H1 (cell line): ENCODE measurements at regions of chr5 and their contacts with region 1.

Region 1: DNA sequence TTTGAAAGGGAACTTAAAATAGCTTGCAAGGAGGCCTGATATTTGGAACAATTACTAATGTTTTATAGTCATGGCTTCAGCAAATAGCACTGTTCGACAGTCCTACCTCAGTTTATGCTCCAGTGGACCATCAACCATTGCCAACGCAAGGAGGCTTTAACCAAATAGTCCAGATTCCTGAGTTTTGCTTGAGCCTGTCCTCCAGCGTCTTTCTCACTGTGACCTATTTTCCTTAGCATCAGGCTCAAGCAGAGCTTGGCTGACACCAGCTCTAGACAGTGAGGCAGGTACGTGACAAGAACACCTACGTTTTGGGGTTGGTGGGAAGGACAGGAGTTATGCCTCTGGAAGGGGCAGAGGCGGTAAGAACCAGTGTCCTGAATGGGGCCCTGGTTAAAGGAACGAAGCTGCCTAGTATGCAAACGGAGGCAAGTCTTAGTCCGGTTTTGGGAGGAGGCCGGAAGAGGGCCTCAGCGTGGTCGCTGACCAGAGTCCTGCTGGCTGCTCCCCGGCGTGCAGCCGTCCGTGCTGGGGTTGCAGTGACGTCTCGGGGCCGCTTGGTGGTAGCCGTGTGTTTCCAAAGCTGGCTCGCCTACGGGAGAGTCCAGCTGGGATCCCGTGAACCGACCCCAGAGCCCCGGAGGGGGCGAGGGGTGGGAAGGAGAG is 998 bp upstream of the FGF18 start:
- DNase-seq: peak; percentile 69 to 94
- H3K4me3 ChIP-seq: peak overlapping the region; percentile 35 to 73 (median 70)
- H3K27ac ChIP-seq: no peak overlapping the region
- H3K4me1 ChIP-seq: peaks cover 0 to 22% (median 13%) of the 10 kb centered on the region in 4 experiments; a peak in 6 of 7 replicates
- H3K27me3 ChIP-seq: peaks cover 22 to 37% (median 28%) of the 10 kb centered on the region in 4 experiments
- CTCF ChIP-seq: peak in 2 of 3 experiments; percentile 95 to 97; a peak in 3 of 4 replicates
- EP300 ChIP-seq: no peak
- POLR2A ChIP-seq: no peak
- RAD21 ChIP-seq: peak; percentile 94 to 98

Region 2: DNA sequence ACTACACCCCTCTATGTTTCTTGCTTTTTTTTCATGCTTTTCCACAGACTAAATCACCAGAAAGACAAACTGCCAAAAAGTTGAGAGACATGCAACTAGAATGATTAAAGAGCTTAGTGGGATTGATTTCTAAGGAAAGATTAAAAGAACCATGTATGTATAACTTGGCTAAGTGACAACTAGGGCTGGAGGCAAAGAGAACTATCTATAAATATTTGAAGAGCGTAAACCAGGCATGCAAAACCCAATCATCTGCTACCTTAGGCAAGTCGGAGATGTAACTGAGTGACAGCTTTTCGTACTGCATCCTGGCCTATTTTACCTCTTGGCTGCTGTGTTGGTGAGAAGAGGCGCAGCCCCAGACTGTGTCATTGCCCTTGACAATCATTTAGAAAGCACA is 230.4 kb before region 1 on chr5:
- CTCF ChIA-PET with region 1: no interaction called
- POLR2A ChIA-PET with region 1: no interaction called
- DNase-seq: no peak
- H3K4me3 ChIP-seq: no peak overlapping the region
- H3K27ac ChIP-seq: no peak overlapping the region
- H3K4me1 ChIP-seq: no peaks in the 10 kb centered on the region
- H3K27me3 ChIP-seq: peaks cover 0 to 1% (median 0%) of the 10 kb centered on the region in 4 experiments; a peak in 1 of 7 replicates
- CTCF ChIP-seq: no peak
- EP300 ChIP-seq: no peak
- POLR2A ChIP-seq: no peak
- RAD21 ChIP-seq: no peak

Region 3: GRCh38 chr5:171437286-171437821 is 18.9 kb after region 1 on chr5:
- CTCF ChIA-PET with region 1: interaction called, 56 read pairs
- POLR2A ChIA-PET with region 1: interaction called, 6 read pairs
- DNase-seq: no peak
- H3K4me3 ChIP-seq: peak overlapping the region in 1 of 4 experiments; percentile 1; a peak in 2 of 8 replicates
- H3K27ac ChIP-seq: no peak overlapping the region
- H3K4me1 ChIP-seq: peaks cover 0 to 38% (median 23%) of the 10 kb centered on the region in 4 experiments; a peak in 6 of 7 replicates
- H3K27me3 ChIP-seq: no peaks in the 10 kb centered on the region
- CTCF ChIP-seq: peak in 1 of 3 experiments; percentile 14; a peak in 1 of 4 replicates
- EP300 ChIP-seq: no peak
- POLR2A ChIP-seq: no peak
- RAD21 ChIP-seq: peak in 1 of 2 experiments; percentile 2; a peak in 2 of 4 replicates

Region 4: DNA sequence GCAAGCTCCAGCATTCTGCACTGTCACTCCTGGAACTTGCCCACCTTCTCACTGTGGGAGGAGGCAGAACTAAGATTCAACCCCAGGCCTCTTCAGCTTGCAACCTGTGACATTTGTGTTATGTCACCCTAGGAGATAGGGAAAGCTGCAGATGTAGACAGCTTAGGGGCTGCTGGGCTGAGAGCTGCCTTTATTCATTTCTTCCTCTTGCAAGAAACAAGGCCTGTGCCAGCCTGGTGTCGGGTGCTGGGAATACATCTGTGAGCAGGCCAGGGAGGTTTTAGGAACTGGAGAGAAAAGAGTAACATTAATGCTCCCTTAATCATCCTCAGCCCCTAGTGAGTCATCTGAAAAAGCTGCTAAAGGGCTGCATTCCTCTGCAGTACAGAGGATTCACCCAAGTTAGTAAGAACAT is 102.8 kb after region 1 on chr5:
- CTCF ChIA-PET with region 1: interaction called, 12 read pairs
- POLR2A ChIA-PET with region 1: interaction called, 3 read pairs
- DNase-seq: peak in 1 of 2 experiments; percentile 61
- H3K4me3 ChIP-seq: no peak overlapping the region
- H3K27ac ChIP-seq: peak overlapping the region; percentile 34; the same call in 1 of the 2 replicates
- H3K4me1 ChIP-seq: peaks cover 10 to 37% (median 20%) of the 10 kb centered on the region in 4 experiments
- H3K27me3 ChIP-seq: peaks cover 0 to 12% (median 2%) of the 10 kb centered on the region in 4 experiments; a peak in 3 of 7 replicates
- CTCF ChIP-seq: no peak
- EP300 ChIP-seq: no peak
- POLR2A ChIP-seq: no peak
- RAD21 ChIP-seq: no peak

Region 5: DNA sequence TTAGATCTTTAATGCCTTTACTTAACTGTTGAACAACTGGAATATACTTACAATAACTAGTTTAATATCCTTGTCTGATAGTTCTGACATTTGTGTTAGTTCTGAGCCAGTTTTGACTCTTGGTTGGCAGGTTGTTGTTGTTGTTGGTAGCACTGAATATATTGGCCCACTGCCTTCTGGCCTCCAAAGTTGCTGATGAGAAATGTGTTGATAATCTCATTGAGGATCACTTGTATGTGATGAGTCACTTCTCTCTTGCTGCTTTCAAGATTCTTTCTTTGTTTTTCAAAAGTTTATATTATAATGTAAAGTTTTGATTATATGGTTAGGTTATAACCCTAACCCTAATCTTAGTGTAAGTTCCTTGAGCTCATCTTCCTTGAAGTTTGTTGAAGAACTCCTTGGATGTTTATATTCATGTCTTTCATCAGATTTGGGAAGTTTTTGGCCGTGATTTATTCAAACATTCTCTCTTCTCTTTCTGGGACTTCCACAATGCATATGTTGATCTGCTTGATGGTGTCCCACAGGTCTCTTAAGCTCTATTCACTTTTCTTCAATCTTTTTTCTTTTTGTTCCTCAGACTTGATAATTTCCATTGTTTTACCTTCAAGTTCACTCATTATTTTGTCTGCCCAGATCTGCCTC is 150.7 kb after region 1 on chr5:
- CTCF ChIA-PET with region 1: no interaction called
- POLR2A ChIA-PET with region 1: no interaction called
- DNase-seq: no peak
- H3K4me3 ChIP-seq: no peak overlapping the region
- H3K27ac ChIP-seq: no peak overlapping the region
- H3K4me1 ChIP-seq: no peaks in the 10 kb centered on the region
- H3K27me3 ChIP-seq: no peaks in the 10 kb centered on the region; a peak in 1 of 7 replicates
- CTCF ChIP-seq: no peak
- EP300 ChIP-seq: no peak
- POLR2A ChIP-seq: no peak
- RAD21 ChIP-seq: no peak

Region 6: DNA sequence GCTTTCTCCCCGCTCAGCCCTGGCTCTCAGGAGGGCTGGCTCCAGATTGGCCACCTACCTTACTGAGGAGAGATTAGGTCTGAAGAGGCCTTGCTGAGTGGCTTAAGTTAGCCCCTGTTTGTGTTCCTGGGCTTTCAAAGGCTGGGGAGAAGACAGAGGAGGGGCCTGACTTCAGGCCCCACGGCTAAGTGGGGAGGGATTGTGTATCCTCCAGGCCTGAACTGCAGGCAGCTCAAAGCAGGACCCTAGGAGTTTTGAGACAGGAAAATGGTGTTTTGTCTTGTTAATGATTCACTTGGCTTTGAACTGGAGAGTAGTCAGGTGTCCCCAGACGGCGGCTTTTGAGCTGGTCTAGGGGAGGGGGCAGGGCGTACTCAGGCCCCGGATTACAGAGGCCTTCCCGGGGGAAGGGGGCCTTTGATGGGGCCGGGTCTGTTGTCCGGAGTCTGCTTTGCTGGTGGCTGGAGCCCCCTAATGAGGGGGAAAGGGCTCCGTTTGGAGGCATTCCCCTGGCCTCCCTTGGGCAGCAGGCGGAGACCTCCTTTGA is 205.2 kb after region 1 on chr5:
- CTCF ChIA-PET with region 1: interaction called, 12 read pairs
- POLR2A ChIA-PET with region 1: interaction called, 3 read pairs
- DNase-seq: peak; percentile 79 to 81
- H3K4me3 ChIP-seq: peak overlapping the region in 1 of 4 experiments; percentile 24; a peak in 1 of 8 replicates
- H3K27ac ChIP-seq: no peak overlapping the region
- H3K4me1 ChIP-seq: peaks cover 9 to 14% (median 10%) of the 10 kb centered on the region in 4 experiments; a peak in 6 of 7 replicates
- H3K27me3 ChIP-seq: peaks cover 58 to 95% (median 88%) of the 10 kb centered on the region in 4 experiments
- CTCF ChIP-seq: peak in 1 of 3 experiments; percentile 13; a peak in 1 of 4 replicates
- EP300 ChIP-seq: peak in 1 of 2 experiments; percentile 68; a peak in 1 of 3 replicates
- POLR2A ChIP-seq: no peak
- RAD21 ChIP-seq: peak in 1 of 2 experiments; percentile 19; a peak in 2 of 4 replicates

Region 7: DNA sequence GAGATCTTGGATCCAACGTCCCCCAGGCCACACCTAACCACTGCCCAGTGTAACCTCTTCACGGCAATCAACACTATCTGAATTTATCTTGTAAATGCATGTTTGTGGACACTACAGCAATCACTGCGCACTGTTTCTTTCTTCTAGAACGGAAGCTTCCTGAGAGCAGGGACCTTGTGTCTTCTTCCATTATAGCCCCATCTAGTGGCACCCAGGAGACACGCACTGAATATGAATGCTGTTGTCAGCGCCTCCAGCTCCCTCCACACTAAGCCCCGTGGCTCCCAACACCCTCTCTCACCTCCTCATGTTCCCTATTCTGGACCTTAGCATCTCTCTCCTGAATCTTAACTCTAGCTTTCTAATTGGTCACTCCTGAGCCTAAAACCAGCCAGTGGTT is 439.9 kb after region 1 on chr5:
- CTCF ChIA-PET with region 1: interaction called, 10 read pairs
- POLR2A ChIA-PET with region 1: interaction called, 4 read pairs
- DNase-seq: no peak
- H3K4me3 ChIP-seq: no peak overlapping the region
- H3K27ac ChIP-seq: no peak overlapping the region
- H3K4me1 ChIP-seq: peaks cover 0 to 5% (median 2%) of the 10 kb centered on the region in 4 experiments; a peak in 5 of 7 replicates
- H3K27me3 ChIP-seq: no peaks in the 10 kb centered on the region
- CTCF ChIP-seq: peak; percentile 64 to 89 (median 73)
- EP300 ChIP-seq: no peak
- POLR2A ChIP-seq: peak in 1 of 2 experiments; percentile 10; a peak in 1 of 3 replicates
- RAD21 ChIP-seq: peak; percentile 69 to 70